T-cell (primary cell): ENCODE measurements at regions of chr7 and their contacts with region 1.

Region 1: GRCh38 chr7:6026011-6026819 is 5.0 kb upstream of the ANKRD61 start:
- DNase-seq: peak; percentile 51 to 83 (median 75)
- ATAC-seq: peak; percentile 98 to 100 (median 100)
- H3K4me3 ChIP-seq: peak overlapping the region; percentile 4 to 50
- H3K4me3 Mint-ChIP-seq: peak overlapping the region; percentile 59 to 79 (median 76)
- H3K27ac ChIP-seq: peak overlapping the region; percentile 76
- H3K27ac Mint-ChIP-seq: peak overlapping the region; percentile 93
- H3K4me1 ChIP-seq: peaks cover 6 to 23% of the 10 kb centered on the region in 2 experiments
- H3K4me1 Mint-ChIP-seq: peaks cover 19 to 24% (median 22%) of the 10 kb centered on the region in 3 donors
- H3K27me3 ChIP-seq: no peaks in the 10 kb centered on the region
- H3K27me3 Mint-ChIP-seq: no peaks in the 10 kb centered on the region

Region 2: DNA sequence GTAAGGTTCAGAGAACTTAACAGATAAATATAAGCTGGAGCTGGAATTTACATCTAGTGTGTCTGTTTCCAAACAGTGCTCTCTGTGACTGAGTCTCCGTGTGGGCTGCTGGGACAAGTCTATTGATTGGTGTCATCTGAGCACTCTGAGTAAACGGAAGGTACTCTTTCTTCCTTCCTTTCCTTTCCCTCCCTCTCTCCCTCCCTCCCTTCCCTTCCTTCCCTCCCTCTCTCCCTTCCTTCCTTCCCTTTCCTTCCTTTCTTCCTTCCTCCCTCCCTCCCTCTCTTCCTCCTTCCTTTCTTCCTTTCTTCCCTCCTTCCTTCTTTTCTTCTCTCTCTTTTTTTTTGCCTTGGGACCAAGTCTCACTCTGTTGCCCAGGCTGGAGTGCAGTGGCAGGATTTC is 66.7 kb after region 1 on chr7:
- CTCF ChIA-PET with region 1: no interaction called
- POLR2A ChIA-PET with region 1: no interaction called
- DNase-seq: no peak
- ATAC-seq: no peak
- H3K4me3 ChIP-seq: no peak overlapping the region
- H3K4me3 Mint-ChIP-seq: no peak overlapping the region
- H3K27ac ChIP-seq: no peak overlapping the region
- H3K27ac Mint-ChIP-seq: no peak overlapping the region
- H3K4me1 ChIP-seq: no peaks in the 10 kb centered on the region
- H3K4me1 Mint-ChIP-seq: no peaks in the 10 kb centered on the region
- H3K27me3 ChIP-seq: peaks cover 0 to 31% of the 10 kb centered on the region in 2 experiments
- H3K27me3 Mint-ChIP-seq: peaks cover 23 to 34% of the 10 kb centered on the region in 2 donors

Region 3: GRCh38 chr7:6228361-6229229 is 202.4 kb after region 1 on chr7:
- CTCF ChIA-PET with region 1: no interaction called
- POLR2A ChIA-PET with region 1: interaction called in 1 of 2 experiments, 13 read pairs
- DNase-seq: peak in 1 of 35 experiments; percentile 7
- ATAC-seq: peak in 2 of 4 experiments; percentile 42 to 69
- H3K4me3 ChIP-seq: no peak overlapping the region
- H3K4me3 Mint-ChIP-seq: peak overlapping the region in 1 of 3 donors; percentile 26
- H3K27ac ChIP-seq: no peak overlapping the region
- H3K27ac Mint-ChIP-seq: no peak overlapping the region
- H3K4me1 ChIP-seq: peaks cover 0 to 10% of the 10 kb centered on the region in 2 experiments
- H3K4me1 Mint-ChIP-seq: peaks cover 34 to 45% (median 37%) of the 10 kb centered on the region in 3 donors
- H3K27me3 ChIP-seq: peaks cover 0 to 8% of the 10 kb centered on the region in 2 experiments
- H3K27me3 Mint-ChIP-seq: no peaks in the 10 kb centered on the region